ENCODE measurements at regions of chr7 and their contacts with region 1.

Region 1: GRCh38 chr7:41705109-41705901 is 2.4 kb upstream of the INHBA start:
- DNase-seq: peak; percentile 62
- ATAC-seq: peak; percentile 95
- H3K4me3 Mint-ChIP-seq: peak overlapping the region; percentile 80
- H3K27ac Mint-ChIP-seq: peak overlapping the region; percentile 50
- H3K4me1 Mint-ChIP-seq: peaks cover 21% of the 10 kb centered on the region
- H3K27me3 Mint-ChIP-seq: peaks cover 14% of the 10 kb centered on the region
- CTCF ChIP-seq: no peak

Region 2: DNA sequence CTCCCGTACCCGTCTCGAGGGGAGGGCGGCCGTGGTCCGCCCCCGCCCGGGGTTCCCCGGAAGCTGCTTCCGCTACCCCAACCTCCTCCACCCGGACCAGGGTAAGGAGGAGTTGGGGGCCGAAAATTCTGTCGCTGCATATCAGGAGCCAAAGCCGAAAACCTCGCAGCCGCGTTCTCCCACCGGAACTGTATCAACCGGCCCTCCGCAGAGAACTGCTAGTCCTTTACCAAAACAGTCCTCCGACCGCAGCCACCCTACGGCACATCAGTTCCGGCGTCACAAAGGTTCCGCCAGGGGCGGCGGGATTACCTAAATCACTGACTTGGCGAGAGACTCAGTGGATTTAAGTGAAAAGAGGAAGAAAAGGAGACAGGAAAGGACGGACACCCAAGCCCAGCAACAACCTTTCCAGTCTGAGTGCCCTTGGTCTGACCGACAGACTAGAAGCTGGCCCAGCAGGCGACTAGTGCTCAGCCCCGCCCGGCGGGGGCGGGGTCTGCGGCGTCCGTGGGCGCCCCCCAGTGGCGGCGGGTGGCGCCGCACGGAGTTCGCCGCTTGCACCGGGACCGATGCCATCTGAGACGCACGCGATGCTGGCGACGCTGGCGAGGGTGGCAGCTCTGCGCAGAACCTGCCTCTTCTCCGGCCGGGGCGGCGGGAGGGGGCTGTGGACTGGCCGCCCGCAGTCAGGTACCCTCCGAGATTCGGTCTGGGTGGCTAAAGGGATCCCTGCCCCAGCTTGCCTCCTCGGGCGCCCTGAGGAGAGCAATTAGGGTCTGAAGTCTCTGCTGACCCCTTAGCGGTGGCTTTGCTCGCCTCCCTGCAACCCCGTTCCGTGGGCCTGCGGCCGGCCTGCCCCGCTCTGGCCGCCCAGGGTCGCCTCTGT is 1570.6 kb before region 1 on chr7 and contains the starts of genes MPLKIP and SUGCT:
- CTCF ChIA-PET with region 1: interaction called, 4 read pairs
- POLR2A ChIA-PET with region 1: no interaction called
- intact Hi-C with region 1: loop called (anchors 10 kb)
- DNase-seq: peak; percentile 91
- ATAC-seq: peak; percentile 90
- H3K4me3 Mint-ChIP-seq: peak within 1 kb of the TSS; percentile 97
- H3K27ac Mint-ChIP-seq: peak within 1 kb of the TSS; percentile 97
- H3K4me1 Mint-ChIP-seq: peaks cover 35% of the 10 kb centered on the region
- H3K27me3 Mint-ChIP-seq: no peaks in the 10 kb centered on the region
- CTCF ChIP-seq: no peak
- total RNA-seq, gene MPLKIP: 29.9 and 35.1 TPM in 2 replicates
- total RNA-seq, gene SUGCT: 0.61 and 1.3 TPM in 2 replicates

Region 3: GRCh38 chr7:40232242-40232893 is 1472.9 kb before region 1 on chr7:
- CTCF ChIA-PET with region 1: interaction called, 7 read pairs
- POLR2A ChIA-PET with region 1: no interaction called
- intact Hi-C with region 1: loop called (anchors 10 kb)
- DNase-seq: no peak
- ATAC-seq: no peak
- H3K4me3 Mint-ChIP-seq: no peak overlapping the region
- H3K27ac Mint-ChIP-seq: no peak overlapping the region
- H3K4me1 Mint-ChIP-seq: no peaks in the 10 kb centered on the region
- H3K27me3 Mint-ChIP-seq: no peaks in the 10 kb centered on the region
- CTCF ChIP-seq: no peak

Region 4: GRCh38 chr7:40329601-40330153 is 1375.6 kb before region 1 on chr7:
- CTCF ChIA-PET with region 1: interaction called, 16 read pairs
- POLR2A ChIA-PET with region 1: no interaction called
- intact Hi-C with region 1: loop called (anchors 1 kb)
- DNase-seq: no peak
- ATAC-seq: peak; percentile 31
- H3K4me3 Mint-ChIP-seq: no peak overlapping the region
- H3K27ac Mint-ChIP-seq: no peak overlapping the region
- H3K4me1 Mint-ChIP-seq: no peaks in the 10 kb centered on the region
- H3K27me3 Mint-ChIP-seq: no peaks in the 10 kb centered on the region
- CTCF ChIP-seq: no peak

Region 5: DNA sequence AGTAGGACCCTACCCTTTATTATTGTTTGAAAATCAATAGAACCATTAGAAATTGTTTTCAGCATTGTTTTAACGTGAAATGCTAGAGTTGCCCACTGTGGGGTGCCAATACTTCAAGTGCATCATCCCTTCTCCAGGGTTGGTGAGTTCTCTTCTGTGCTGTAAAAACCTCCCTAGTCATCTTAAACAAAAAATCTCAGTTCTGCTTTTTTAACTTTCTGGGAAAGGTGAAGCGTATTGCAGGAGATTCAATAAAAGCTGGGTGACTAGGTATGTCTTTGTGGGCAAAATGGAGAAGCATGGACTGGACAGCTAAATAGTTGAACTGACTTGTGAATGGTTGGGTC is 871.4 kb before region 1 on chr7:
- CTCF ChIA-PET with region 1: no interaction called
- POLR2A ChIA-PET with region 1: no interaction called
- intact Hi-C with region 1: loop called (anchors 10 kb)
- DNase-seq: no peak
- ATAC-seq: peak; percentile 21
- H3K4me3 Mint-ChIP-seq: no peak overlapping the region
- H3K27ac Mint-ChIP-seq: no peak overlapping the region
- H3K4me1 Mint-ChIP-seq: peaks cover 18% of the 10 kb centered on the region
- H3K27me3 Mint-ChIP-seq: no peaks in the 10 kb centered on the region
- CTCF ChIP-seq: no peak

Region 6: DNA sequence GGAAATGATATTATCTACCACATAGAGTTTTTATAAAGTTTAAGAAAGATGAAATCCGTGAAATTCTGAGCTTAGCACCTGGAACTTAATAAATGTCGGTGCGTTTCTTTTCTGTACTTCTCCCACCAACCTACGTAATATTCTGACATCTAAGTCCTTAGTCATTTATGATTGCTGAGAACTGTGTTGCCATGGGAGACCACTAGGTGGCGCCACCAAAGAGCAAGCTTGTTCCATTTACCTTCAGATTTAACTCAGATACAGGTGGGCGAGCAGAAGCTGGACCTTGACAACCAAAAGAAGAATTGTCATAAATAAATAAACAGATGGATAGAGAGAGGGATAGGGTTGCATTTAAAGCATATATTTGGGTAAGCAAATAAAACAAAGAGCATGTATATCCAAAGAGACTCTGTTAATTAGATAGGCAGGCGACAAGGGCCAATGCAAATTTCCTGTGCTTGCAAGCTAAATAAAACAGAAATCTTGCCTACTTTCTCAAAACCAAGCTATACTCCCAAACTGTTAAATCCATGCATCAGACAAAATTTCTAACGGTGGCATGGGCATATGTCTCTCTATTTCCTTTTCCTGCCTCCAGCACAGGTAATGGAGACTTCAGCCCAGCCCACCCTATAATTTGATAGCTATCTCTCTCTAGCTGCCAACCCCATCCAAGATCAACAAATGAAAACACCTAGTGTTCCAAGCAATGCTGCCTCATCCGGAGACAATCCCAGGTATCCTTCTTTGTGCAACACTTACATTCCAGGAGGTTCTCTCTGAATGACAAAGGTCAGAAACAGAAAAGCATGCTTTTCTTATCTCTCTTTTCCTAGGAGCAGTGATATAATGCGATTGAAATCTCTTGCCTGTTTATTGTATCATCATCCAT is 702.0 kb before region 1 on chr7:
- CTCF ChIA-PET with region 1: interaction called, 6 read pairs
- POLR2A ChIA-PET with region 1: no interaction called
- intact Hi-C with region 1: loop called (anchors 1 kb)
- DNase-seq: no peak
- ATAC-seq: no peak
- H3K4me3 Mint-ChIP-seq: no peak overlapping the region
- H3K27ac Mint-ChIP-seq: no peak overlapping the region
- H3K4me1 Mint-ChIP-seq: no peaks in the 10 kb centered on the region
- H3K27me3 Mint-ChIP-seq: no peaks in the 10 kb centered on the region
- CTCF ChIP-seq: no peak